ENCODE measurements at regions of chr11 and their contacts with region 1.

Region 1: GRCh38 chr11:128890543-128891368 is at the start of gene KCNJ5:
- DNase-seq: no peak
- H3K4me3 ChIP-seq: peak within 1 kb of the TSS; percentile 50
- CTCF ChIP-seq: no peak

Region 2: DNA sequence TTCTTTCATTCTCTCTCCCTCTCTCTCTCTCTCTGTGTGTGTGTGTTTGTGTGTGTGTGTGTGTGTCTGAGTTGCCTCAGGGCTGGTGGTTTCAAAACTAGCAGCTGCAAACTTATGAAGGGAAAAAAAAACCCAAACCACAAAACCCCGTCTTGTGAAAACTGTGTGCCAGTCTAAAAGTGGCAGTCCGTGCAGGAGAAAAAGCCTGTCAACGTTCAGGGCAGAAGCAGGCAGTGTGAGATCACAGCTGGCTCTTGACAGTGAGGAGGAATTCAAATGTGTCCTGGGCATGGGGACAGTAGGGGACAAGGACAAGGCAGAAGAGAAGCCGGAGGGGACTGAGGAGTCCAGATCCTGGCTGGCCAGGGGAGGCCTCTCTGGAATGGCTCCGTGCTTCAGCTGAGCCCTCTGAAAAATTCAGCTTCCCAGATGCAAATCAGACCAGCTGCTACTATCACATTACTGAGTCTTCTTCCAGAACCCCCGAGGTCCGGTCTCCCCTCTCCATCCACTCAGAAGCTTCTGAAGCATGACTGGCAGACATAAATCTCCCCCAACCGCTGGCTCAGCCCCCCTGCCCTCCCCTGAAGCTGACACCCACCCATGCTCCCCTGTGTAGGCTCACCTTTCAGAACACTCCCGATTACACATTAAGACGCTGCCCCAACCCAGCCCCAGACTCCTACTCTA is 165.0 kb before region 1 on chr11:
- CTCF ChIA-PET with region 1: no interaction called
- POLR2A ChIA-PET with region 1: no interaction called
- DNase-seq: peak; percentile 60
- H3K4me3 ChIP-seq: no peak overlapping the region
- CTCF ChIP-seq: no peak

Region 3: DNA sequence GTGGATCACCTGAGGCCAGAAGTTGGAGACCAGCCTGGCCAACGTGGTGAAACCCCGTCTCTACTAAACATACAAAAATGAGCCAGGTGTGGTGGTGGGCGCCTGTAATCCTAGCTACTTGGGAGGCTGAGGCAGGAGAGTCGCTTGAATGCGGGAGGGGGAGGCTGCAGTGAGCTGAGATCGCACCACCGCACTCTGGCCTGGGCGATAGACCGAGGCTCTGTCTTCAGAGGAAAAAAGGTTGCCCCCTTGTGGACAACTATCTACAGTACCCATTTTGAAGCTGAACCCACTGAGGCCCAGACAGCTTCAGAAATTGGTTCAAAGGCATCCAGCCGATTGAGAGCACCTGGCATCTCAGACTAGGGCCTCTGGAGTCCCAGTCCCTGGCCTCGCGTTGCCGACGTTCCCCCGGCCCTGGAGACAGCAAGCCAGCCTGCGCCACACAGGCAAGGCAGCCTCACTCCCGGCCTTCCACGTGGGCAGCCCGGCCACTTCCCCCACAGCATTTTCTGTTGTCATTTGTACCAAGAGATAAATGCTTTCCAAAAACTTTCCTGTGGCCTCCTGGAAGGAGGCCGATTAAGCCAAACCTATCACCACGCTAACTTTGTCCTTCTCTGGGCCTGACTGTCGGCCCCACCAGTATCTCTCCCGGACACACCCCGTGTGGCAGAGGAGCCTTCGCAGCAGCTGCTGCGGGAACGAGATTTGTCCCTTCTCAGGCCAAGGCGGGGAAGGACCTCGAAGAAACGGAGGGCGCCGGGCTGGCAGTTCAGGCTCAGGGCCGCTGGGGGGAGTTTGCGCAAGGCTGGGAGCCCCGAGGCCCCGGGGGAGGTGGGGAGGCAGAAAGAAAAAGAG is 114.1 kb before region 1 on chr11:
- CTCF ChIA-PET with region 1: no interaction called
- POLR2A ChIA-PET with region 1: no interaction called
- DNase-seq: no peak
- H3K4me3 ChIP-seq: no peak overlapping the region
- CTCF ChIP-seq: peak; percentile 36

Region 4: DNA sequence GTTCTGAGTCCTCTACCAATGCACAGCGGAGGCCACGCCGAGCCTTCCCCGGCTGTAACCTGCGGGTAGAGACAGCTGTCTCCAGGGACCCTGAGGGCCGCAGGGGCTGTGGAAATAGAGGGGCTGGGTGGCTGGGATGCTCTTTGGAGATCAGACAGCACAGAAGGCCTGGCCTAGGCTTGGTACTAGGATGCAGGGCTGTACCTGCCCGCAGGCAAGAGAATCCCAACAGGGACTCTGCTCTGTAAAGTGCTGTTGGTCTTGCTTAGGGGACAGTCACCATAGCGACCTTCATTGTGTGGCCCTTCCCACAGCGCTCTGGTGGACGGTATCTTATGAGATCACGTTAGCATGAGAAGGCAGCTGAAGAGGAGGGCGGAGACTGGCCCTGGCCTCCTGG is 10.9 kb before region 1 on chr11:
- CTCF ChIA-PET with region 1: interaction called, 51 read pairs
- POLR2A ChIA-PET with region 1: no interaction called
- DNase-seq: no peak
- H3K4me3 ChIP-seq: no peak overlapping the region
- CTCF ChIP-seq: no peak

Region 5: DNA sequence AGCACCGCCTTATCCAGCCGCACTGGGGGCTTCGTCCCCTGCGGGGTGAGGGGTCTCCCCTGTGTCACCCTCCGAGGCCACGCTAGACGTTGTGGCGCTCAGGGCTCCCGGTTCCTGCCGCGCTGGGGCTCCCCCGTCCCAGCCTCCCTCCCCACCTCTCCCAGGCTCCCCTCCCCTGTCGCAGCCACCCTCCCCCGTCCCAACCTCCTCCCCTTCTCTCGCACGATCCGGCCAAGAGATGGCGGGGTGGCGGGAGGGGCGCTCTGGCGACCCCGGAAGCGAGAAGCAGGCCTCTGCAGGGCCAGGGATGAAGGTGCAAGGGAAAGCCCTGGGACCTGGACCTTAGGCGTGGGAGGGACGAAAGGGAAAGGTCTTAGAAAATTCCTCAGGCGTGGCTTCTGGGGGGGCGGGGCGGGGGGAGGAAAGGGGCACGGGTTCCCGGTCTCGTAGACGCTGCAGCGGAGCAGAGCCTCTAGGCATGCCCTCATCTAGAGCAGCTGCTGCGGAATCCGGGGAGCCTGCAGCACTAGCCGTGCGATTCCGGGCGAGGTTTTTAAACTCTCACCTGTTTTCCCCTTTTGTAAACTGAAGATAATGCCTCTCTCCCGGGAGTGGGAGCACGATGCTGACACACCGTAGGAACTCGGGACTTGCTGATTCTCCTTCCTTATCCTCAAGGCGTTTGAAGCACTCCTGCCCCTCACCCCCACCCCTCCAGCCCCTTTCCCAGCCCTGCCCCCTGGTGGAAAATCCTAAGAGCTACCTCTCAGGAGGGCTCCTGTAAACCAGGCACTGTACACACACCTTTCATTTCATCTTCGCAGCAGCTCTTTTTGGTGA is 14.8 kb after region 1 on chr11:
- CTCF ChIA-PET with region 1: interaction called, 50 read pairs
- POLR2A ChIA-PET with region 1: interaction called, 3 read pairs
- DNase-seq: no peak
- H3K4me3 ChIP-seq: peak overlapping the region; percentile 60
- CTCF ChIP-seq: peak; percentile 29

Region 6: GRCh38 chr11:130087294-130087926 is 1196.7 kb after region 1 on chr11:
- CTCF ChIA-PET with region 1: no interaction called
- POLR2A ChIA-PET with region 1: no interaction called
- DNase-seq: no peak
- H3K4me3 ChIP-seq: no peak overlapping the region
- CTCF ChIP-seq: no peak

Measured in AG04449 (cell line).